ENCODE measurements at regions of chr9 and their contacts with region 1.

Region 1: DNA sequence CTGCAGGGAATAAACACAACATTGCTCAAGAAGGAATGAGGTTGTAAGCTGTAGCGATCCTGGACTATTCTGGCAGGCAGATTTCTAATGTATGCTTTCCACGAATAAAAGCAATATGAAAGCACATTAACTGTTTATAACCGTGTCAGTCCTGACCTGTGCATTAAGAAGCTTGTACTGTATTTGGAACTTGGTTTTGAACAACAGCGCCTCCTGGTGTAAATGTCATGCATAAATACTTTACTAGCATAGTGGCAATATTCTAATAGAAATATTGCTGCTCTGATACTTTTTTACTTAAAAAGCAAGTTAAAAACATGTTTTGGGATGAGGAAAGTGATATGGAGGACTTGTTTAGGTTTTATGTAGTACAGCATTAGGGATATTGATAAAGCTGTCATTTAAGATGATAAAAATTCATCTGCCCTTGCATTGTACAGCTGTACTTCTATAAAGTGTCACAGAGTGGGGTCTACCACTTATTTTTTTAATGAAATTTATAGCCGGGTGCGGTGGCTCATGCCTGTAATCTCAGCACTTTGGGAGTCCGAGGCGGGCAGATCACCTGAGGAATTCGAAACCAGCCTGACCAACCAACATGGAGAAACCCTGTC is 70.7 kb upstream of the GNE start:
- DNase-seq: peak in 2 of 5 donors; percentile 35 to 39
- ATAC-seq: peak in 2 of 4 donors; percentile 58 to 60
- H3K4me3 ChIP-seq: no peak overlapping the region
- H3K27ac ChIP-seq: no peak overlapping the region
- H3K4me1 ChIP-seq: peaks cover 0 to 5% (median 1%) of the 10 kb centered on the region in 12 donors
- H3K27me3 ChIP-seq: no peaks in the 10 kb centered on the region
- CTCF ChIP-seq: peak; percentile 67 to 86 (median 78)
- POLR2A ChIP-seq: no peak

Region 2: DNA sequence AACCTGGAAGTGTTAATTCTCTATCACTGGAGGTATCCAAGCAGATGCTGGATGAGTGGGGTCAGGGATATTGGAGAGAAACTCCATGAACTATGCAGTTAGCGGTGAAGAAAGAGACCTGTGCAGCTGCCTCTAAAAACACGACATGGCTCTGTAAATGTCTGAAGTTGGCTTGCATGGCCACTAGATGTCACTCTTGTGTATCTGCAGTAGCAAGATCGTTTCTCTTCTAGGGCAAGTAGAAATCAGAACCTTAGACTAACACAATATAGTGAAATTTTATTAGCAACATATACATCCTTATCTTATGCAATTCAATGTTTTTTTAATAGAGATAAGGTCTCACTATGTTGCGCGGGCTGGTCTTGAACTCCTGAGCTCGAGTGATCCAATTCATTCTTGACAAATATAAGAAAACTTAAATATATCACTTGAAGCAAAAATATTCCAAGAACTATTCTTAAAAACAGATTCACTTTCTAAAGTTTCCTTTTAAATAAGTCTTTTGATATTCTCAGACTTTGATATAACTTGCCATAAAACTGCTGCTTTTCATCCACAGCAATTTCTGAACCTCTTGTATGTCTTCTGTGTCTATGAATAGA is 373.9 kb before region 1 on chr9:
- intact Hi-C with region 1: loop called in 1 of 10 experiments (anchors 10 kb)
- DNase-seq: peak in 2 of 5 donors; percentile 50 to 54
- ATAC-seq: peak in 3 of 4 donors; percentile 75 to 84 (median 79)
- H3K4me3 ChIP-seq: no peak overlapping the region
- H3K27ac ChIP-seq: no peak overlapping the region
- H3K4me1 ChIP-seq: peaks cover 0 to 10% (median 0%) of the 10 kb centered on the region in 12 donors
- H3K27me3 ChIP-seq: peaks cover 0 to 6% (median 0%) of the 10 kb centered on the region in 9 donors
- CTCF ChIP-seq: peak; percentile 83 to 94 (median 88)
- POLR2A ChIP-seq: no peak

Region 3: DNA sequence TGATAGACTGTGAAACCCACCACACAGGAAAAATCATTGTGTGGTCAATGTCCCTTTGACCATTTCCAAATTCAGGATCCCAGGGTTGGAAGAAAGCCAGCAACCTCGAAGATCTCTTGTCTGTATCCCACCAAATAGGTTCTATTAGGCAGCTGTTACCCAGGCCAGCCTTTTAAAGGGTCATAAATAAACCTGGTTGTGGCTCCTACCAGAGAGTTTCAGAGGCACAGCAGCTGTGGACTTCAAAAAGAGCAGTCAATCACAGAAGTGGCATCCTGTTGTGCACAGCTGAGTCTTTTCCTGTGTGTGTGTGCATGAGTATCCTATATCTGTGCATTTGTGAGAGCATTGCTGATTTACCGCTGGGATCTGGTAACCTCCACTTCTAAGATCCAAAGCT is 347.2 kb before region 1 on chr9:
- intact Hi-C with region 1: no loop called
- DNase-seq: no peak
- ATAC-seq: no peak
- H3K4me3 ChIP-seq: no peak overlapping the region
- H3K27ac ChIP-seq: no peak overlapping the region
- H3K4me1 ChIP-seq: no peaks in the 10 kb centered on the region
- H3K27me3 ChIP-seq: peaks cover 0 to 5% (median 0%) of the 10 kb centered on the region in 9 donors
- CTCF ChIP-seq: no peak
- POLR2A ChIP-seq: no peak

Region 4: GRCh38 chr9:36102742-36103495 is 226.0 kb before region 1 on chr9:
- intact Hi-C with region 1: loop called in 6 of 10 experiments (anchors 5 to 10 kb)
- DNase-seq: peak; percentile 76 to 89 (median 80)
- ATAC-seq: peak; percentile 80 to 97 (median 94)
- H3K4me3 ChIP-seq: no peak overlapping the region
- H3K27ac ChIP-seq: peak overlapping the region in 3 of 12 donors; percentile 3 to 15 (median 11)
- H3K4me1 ChIP-seq: peaks cover 0 to 9% (median 0%) of the 10 kb centered on the region in 12 donors
- H3K27me3 ChIP-seq: no peaks in the 10 kb centered on the region
- CTCF ChIP-seq: peak; percentile 62 to 88 (median 78)
- POLR2A ChIP-seq: no peak

Region 5: DNA sequence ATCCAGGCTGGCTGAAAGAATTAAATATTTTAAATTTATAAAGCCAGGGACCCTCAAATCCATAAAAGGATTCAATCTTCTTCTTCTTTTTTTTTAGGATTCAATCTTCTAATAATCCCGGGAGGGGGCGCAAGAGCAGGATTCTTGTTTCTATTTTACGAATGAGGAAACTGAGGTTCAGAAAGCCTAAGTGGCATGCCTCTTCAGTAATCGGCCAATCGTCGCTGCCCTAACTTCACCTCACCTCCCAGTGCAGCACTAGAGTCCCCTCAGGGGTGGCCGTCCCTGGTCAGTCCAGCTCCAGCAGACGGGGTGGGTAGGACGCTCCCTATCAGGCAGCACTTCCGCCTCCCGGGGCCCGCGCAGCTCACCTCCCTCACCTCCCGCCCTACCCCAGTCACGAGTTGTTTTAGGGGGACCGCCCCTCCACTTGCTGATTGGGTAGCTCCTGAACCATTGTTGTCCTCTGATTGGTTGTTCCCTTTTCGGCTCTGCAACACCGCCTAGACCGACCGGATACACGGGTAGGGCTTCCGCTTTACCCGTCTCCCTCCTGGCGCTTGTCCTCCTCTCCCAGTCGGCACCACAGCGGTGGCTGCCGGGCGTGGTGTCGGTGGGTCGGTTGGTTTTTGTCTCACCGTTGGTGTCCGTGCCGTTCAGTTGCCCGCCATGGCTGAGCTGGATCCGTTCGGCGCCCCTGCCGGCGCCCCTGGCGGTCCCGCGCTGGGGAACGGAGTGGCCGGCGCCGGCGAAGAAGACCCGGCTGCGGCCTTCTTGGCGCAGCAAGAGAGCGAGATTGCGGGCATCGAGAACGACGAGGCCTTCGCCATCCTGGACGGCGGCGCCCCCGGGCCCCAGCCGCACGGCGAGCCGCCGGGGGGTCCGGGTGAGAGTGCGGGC is 138.3 kb before region 1 on chr9 and contains the start of gene CLTA:
- intact Hi-C with region 1: loop called in 9 of 10 experiments (anchors 2 to 10 kb)
- DNase-seq: peak; percentile 95 to 98 (median 98)
- ATAC-seq: peak; percentile 98 to 100 (median 99)
- H3K4me3 ChIP-seq: peak within 1 kb of the TSS; percentile 69 to 99 (median 88)
- H3K27ac ChIP-seq: peak within 1 kb of the TSS; percentile 66 to 97 (median 92)
- H3K4me1 ChIP-seq: peaks cover 16 to 45% (median 40%) of the 10 kb centered on the region in 12 donors
- H3K27me3 ChIP-seq: no peaks in the 10 kb centered on the region
- CTCF ChIP-seq: peak; percentile 12 to 70 (median 57)
- POLR2A ChIP-seq: peak; percentile 62 to 92
- total RNA-seq, gene CLTA: 43.8 to 123 (median 61.8) TPM

Region 6: DNA sequence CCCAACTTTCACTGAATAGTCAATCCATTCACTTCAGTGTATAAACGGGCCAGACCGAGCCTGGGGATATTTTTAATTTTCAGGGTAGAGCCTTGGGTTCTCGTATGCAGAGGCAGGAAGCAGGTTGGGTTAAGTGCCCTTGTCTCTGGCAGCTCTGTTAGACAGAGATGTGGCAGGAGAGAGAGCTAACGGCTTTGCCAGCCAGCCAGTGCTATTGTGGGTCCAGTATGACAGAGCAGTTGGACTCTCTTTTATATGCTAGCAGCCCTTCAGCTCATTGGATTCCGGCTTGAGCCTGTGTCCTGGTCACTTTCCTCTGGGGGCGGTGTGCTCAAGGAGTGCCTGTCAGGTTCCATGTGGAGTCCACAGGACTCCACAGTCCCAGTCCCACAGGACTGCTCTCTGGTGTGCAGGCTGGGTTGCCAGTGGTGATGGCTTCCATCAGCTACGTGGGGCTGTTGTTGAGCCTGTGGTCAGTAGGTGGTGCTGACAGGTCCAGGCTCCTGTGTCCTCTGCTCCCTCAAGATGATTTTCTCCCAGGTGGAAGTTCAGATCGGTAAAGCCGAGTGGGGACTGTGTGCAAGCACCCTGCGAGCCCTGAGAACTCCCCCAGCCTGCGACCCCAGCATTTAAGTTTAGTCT is 123.9 kb before region 1 on chr9:
- intact Hi-C with region 1: loop called in 2 of 10 experiments (anchors 5 to 10 kb)
- DNase-seq: peak in 2 of 5 donors; percentile 42 to 49
- ATAC-seq: peak; percentile 43 to 82 (median 74)
- H3K4me3 ChIP-seq: no peak overlapping the region
- H3K27ac ChIP-seq: peak overlapping the region in 4 of 12 donors; percentile 26 to 53 (median 34)
- H3K4me1 ChIP-seq: peaks cover 0 to 51% (median 36%) of the 10 kb centered on the region in 12 donors
- H3K27me3 ChIP-seq: no peaks in the 10 kb centered on the region
- CTCF ChIP-seq: peak in 5 of 12 donors; percentile 10 to 40 (median 29)
- POLR2A ChIP-seq: no peak

Region 7: DNA sequence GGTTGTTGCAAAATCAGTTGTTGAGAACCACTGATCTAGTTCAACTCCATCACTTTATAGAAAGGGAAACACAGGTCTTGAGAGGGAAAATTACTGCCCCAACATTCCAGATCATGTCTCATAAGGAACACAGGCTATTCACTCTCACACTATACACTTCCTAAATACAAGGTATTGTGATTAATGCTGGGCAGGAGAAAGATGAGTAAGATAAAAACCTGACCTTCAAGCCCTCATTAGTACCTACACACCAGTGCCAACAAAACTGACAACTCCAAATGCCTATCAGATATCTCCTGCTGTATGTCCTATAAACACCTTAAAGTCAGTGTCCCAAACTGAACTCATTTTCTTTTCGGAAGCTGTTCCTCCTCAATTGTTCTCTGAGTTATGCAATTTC is 78.8 kb before region 1 on chr9:
- intact Hi-C with region 1: loop called (anchors 2 to 10 kb)
- DNase-seq: no peak
- ATAC-seq: no peak
- H3K4me3 ChIP-seq: no peak overlapping the region
- H3K27ac ChIP-seq: no peak overlapping the region
- H3K4me1 ChIP-seq: peaks cover 0 to 22% (median 3%) of the 10 kb centered on the region in 12 donors
- H3K27me3 ChIP-seq: no peaks in the 10 kb centered on the region
- CTCF ChIP-seq: no peak
- POLR2A ChIP-seq: no peak

Region 8: DNA sequence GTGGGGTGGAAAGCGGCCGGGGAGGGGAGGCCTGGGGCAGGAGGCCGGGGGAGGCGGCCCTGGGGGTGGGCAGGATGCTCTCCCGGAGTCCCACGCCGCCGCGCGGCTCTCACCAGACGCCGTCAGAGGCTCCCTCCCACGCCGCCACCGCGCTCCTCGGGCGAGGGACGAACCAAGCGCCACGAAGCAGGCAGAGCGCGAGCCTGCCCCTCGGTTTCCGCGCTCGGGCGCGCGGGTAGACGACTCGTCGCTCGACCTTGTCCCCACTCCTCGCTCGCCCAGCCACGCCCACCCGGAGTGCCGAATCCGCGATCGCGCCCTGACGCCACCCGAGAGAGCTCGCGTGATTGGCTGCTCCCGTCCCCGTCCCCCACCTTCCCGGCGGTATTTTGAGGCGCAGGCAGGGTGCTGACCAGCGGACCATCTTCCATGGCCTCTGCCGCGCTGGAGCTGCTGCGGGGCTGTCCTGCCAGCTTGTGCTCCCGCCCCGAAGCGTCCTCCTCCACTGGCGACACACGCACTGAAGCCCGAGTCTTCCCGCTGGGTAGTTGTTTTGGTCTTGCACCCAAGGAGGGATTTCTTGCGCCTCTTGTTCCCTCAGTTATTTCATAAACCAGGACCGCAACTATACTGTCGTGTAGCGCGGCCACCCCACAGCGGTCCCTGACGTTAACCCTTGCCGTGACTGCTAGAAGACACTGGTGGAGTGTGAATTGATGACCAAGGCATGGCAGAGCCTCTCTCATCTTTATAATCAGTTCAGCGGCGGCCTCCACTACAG is 70.5 kb before region 1 on chr9 and contains the start of gene GNE:
- intact Hi-C with region 1: loop called in 6 of 10 experiments (anchors 5 to 10 kb)
- DNase-seq: peak; percentile 99
- ATAC-seq: peak; percentile 97 to 99 (median 98)
- H3K4me3 ChIP-seq: peak within 1 kb of the TSS; percentile 75 to 99 (median 83)
- H3K27ac ChIP-seq: peak within 1 kb of the TSS; percentile 93 to 100 (median 98)
- H3K4me1 ChIP-seq: peaks cover 0 to 21% (median 8%) of the 10 kb centered on the region in 12 donors
- H3K27me3 ChIP-seq: no peaks in the 10 kb centered on the region
- CTCF ChIP-seq: no peak
- POLR2A ChIP-seq: peak; percentile 8 to 94
- total RNA-seq, gene GNE: 10.4 to 22.0 (median 11.8) TPM

Region 9: DNA sequence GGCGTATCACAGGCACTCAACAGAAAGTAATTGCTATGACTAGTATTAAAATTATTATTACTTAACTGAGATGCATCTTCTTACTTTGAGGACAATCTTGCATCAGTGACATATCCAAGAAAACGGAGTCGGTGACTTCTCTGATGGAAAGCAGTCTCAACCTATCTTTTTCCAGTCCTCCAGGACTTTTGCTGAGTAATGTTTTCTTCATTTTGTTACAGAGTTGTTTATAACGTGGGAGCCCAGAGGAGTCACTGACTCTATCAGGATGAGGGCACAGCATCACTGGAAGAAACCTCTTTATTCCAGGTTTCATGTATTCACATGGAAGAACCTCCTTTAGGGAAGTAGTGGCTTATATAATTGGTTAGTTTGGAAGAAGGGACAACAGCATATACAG is 192.2 kb after region 1 on chr9:
- intact Hi-C with region 1: no loop called
- DNase-seq: no peak
- ATAC-seq: no peak
- H3K4me3 ChIP-seq: no peak overlapping the region
- H3K27ac ChIP-seq: no peak overlapping the region
- H3K4me1 ChIP-seq: no peaks in the 10 kb centered on the region
- H3K27me3 ChIP-seq: no peaks in the 10 kb centered on the region
- CTCF ChIP-seq: no peak
- POLR2A ChIP-seq: no peak